ENCODE measurements at regions of chr18 and their contacts with region 1.

Region 1: DNA sequence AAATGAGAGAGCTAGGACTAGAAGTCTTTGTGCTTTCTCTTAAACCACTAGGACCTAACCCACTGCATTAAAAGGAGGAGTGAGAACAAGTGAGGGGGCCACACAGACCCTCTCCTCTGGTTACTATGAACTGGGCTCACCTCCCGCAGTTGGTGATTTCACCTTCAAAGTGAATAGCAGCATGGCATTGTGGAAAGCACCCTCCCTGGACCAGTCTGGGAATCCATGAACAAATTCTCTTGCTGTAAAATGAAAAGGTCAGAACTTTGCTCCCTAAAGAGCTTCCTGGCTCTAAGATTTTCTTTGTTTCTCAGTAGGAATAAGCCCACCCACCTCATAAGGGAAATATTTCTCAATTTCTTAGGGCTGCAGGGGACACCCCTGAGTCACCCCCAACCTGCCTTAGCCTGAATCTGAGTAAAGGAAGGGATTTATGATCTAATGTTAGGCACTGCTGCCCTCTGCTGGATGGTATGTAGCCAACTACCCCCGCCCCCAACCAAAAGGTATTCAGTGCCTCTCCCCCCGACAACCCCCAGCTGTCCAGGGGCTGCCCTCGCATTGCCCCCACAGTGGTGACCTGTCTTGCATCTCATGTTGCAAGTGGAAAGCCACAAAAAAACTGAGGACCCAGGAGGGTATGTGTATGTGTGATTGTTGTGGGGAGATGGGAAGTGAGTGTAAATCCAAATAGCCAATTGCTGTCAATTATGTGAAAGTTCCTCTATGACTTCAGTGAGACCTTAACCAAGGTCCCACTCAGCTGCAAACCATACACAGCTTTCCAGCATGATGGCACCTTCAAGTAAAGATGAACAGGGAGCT is 230.9 kb upstream of the SLC14A2 start:
- DNase-seq: peak; percentile 51
- ATAC-seq: peak; percentile 46; the same call in 1 of the 2 replicates
- H3K4me3 ChIP-seq: no peak overlapping the region
- H3K27ac ChIP-seq: no peak overlapping the region
- H3K4me1 ChIP-seq: no peaks in the 10 kb centered on the region; the same call in 1 of the 2 replicates
- H3K27me3 ChIP-seq: no peaks in the 10 kb centered on the region
- CTCF ChIP-seq: peak; percentile 69

Region 2: GRCh38 chr18:43620936-43621335 is 1763.4 kb before region 1 on chr18:
- CTCF ChIA-PET with region 1: no interaction called
- POLR2A ChIA-PET with region 1: no interaction called
- intact Hi-C with region 1: loop called (anchors 10 kb)
- DNase-seq: peak; percentile 50
- ATAC-seq: no peak
- H3K4me3 ChIP-seq: no peak overlapping the region
- H3K27ac ChIP-seq: no peak overlapping the region
- H3K4me1 ChIP-seq: no peaks in the 10 kb centered on the region
- H3K27me3 ChIP-seq: no peaks in the 10 kb centered on the region
- CTCF ChIP-seq: peak; percentile 43; the same call in 1 of the 2 replicates

Region 3: GRCh38 chr18:45218436-45218835 is 165.9 kb before region 1 on chr18:
- CTCF ChIA-PET with region 1: no interaction called
- POLR2A ChIA-PET with region 1: no interaction called
- intact Hi-C with region 1: loop called (anchors 5 kb)
- DNase-seq: no peak
- ATAC-seq: no peak
- H3K4me3 ChIP-seq: no peak overlapping the region
- H3K27ac ChIP-seq: no peak overlapping the region
- H3K4me1 ChIP-seq: no peaks in the 10 kb centered on the region
- H3K27me3 ChIP-seq: no peaks in the 10 kb centered on the region
- CTCF ChIP-seq: no peak

Region 4: GRCh38 chr18:45355944-45356520 is 28.3 kb before region 1 on chr18:
- CTCF ChIA-PET with region 1: no interaction called
- POLR2A ChIA-PET with region 1: no interaction called
- intact Hi-C with region 1: no loop called
- DNase-seq: no peak
- ATAC-seq: no peak
- H3K4me3 ChIP-seq: no peak overlapping the region
- H3K27ac ChIP-seq: no peak overlapping the region
- H3K4me1 ChIP-seq: peaks cover 9% of the 10 kb centered on the region
- H3K27me3 ChIP-seq: no peaks in the 10 kb centered on the region
- CTCF ChIP-seq: no peak

Region 5: GRCh38 chr18:45370255-45371010 is 13.9 kb before region 1 on chr18:
- CTCF ChIA-PET with region 1: no interaction called
- POLR2A ChIA-PET with region 1: no interaction called
- intact Hi-C with region 1: no loop called
- DNase-seq: no peak
- ATAC-seq: no peak
- H3K4me3 ChIP-seq: no peak overlapping the region
- H3K27ac ChIP-seq: no peak overlapping the region
- H3K4me1 ChIP-seq: peaks cover 9% of the 10 kb centered on the region
- H3K27me3 ChIP-seq: no peaks in the 10 kb centered on the region
- CTCF ChIP-seq: no peak